MCF 10A (cell line): ENCODE measurements at regions of chr17 and their contacts with region 1.

Region 1: GRCh38 chr17:59619293-59620063 is at the start of gene CLTC:
- DNase-seq: peak; percentile 95
- H3K4me3 Mint-ChIP-seq: peak within 1 kb of the TSS; percentile 98
- H3K27ac Mint-ChIP-seq: peak within 1 kb of the TSS; percentile 100
- H3K4me1 Mint-ChIP-seq: peaks cover 23% of the 10 kb centered on the region
- H3K27me3 Mint-ChIP-seq: no peaks in the 10 kb centered on the region
- CTCF ChIP-seq: no peak
- total RNA-seq, gene CLTC: 240 and 288 TPM in 2 replicates

Region 2: GRCh38 chr17:59415397-59415796 is 204.1 kb before region 1 on chr17:
- CTCF ChIA-PET with region 1: no interaction called
- POLR2A ChIA-PET with region 1: no interaction called
- intact Hi-C with region 1: no loop called
- DNase-seq: no peak
- H3K4me3 Mint-ChIP-seq: no peak overlapping the region
- H3K27ac Mint-ChIP-seq: no peak overlapping the region
- H3K4me1 Mint-ChIP-seq: no peaks in the 10 kb centered on the region
- H3K27me3 Mint-ChIP-seq: no peaks in the 10 kb centered on the region
- CTCF ChIP-seq: no peak

Region 3: DNA sequence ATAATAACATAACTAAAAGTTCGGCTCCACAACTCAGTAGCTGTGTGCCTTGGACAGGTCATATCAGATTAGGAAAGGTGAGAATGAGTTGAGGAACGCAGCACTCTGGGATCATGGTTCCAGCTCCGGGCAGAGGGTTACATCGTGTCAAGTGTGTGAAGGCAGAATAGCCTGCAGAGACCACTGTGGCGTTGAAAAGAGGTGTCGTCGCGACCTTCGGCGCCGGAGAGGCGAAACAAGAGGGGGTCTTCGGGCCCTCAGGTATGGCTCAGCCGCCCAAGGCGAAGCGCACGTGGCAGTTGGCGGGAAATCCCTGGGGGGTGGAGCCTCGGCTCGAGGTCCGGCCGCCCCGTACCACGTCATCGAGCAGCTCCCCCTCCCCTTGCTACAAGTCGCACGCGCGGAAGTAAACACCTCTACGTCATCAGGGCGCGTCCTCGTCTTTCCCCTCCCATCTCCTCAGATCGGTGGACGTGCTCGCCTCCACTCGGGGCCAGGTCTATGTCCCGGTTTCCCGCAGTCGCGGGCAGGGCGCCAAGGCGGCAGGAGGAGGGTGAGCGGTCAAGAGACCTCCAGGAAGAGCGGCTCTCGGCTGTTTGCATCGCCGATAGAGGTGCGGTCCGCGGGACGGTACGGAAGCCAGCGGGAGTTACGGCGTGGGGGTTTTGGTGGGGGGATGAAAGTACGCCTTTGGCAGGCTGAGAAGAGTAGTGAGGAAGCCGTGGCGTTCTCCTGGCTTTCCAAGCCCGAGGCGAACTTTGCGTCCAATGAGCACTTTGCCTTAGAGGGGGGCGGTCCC is 54.1 kb before region 1 on chr17 and contains the start of gene DHX40:
- CTCF ChIA-PET with region 1: no interaction called
- POLR2A ChIA-PET with region 1: interaction called, 36 read pairs
- intact Hi-C with region 1: no loop called
- DNase-seq: peak; percentile 87
- H3K4me3 Mint-ChIP-seq: peak within 1 kb of the TSS; percentile 97
- H3K27ac Mint-ChIP-seq: peak within 1 kb of the TSS; percentile 97
- H3K4me1 Mint-ChIP-seq: peaks cover 5% of the 10 kb centered on the region
- H3K27me3 Mint-ChIP-seq: no peaks in the 10 kb centered on the region
- CTCF ChIP-seq: no peak
- total RNA-seq, gene DHX40: 21.4 and 23.3 TPM in 2 replicates

Region 4: GRCh38 chr17:59634632-59635541 is 15.4 kb after region 1 on chr17:
- CTCF ChIA-PET with region 1: interaction called, 4 read pairs
- POLR2A ChIA-PET with region 1: interaction called, 91 read pairs
- intact Hi-C with region 1: no loop called
- DNase-seq: no peak
- H3K4me3 Mint-ChIP-seq: no peak overlapping the region
- H3K27ac Mint-ChIP-seq: no peak overlapping the region
- H3K4me1 Mint-ChIP-seq: peaks cover 6% of the 10 kb centered on the region
- H3K27me3 Mint-ChIP-seq: no peaks in the 10 kb centered on the region
- CTCF ChIP-seq: no peak

Region 5: DNA sequence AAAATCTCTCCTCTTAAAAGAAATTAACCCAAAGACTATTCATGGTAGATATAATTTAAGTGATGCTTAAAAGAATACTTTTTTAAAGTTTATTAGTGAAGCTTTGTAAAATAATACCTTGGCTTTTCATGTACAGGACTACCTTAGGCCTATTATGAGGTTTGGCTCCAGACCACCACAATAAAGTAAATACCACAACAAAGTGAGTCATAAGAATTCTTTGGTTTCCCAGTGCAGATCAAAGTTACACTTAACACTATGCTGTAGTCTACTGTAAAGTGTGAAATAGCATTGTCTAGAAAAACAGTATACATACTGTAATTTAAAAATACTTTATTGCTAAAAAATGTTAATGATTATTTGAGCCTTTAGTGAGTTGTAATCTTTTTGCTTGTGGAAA is 31.9 kb after region 1 on chr17:
- CTCF ChIA-PET with region 1: no interaction called
- POLR2A ChIA-PET with region 1: interaction called, 18 read pairs
- intact Hi-C with region 1: no loop called
- DNase-seq: no peak
- H3K4me3 Mint-ChIP-seq: no peak overlapping the region
- H3K27ac Mint-ChIP-seq: no peak overlapping the region
- H3K4me1 Mint-ChIP-seq: peaks cover 6% of the 10 kb centered on the region
- H3K27me3 Mint-ChIP-seq: no peaks in the 10 kb centered on the region
- CTCF ChIP-seq: no peak

Region 6: DNA sequence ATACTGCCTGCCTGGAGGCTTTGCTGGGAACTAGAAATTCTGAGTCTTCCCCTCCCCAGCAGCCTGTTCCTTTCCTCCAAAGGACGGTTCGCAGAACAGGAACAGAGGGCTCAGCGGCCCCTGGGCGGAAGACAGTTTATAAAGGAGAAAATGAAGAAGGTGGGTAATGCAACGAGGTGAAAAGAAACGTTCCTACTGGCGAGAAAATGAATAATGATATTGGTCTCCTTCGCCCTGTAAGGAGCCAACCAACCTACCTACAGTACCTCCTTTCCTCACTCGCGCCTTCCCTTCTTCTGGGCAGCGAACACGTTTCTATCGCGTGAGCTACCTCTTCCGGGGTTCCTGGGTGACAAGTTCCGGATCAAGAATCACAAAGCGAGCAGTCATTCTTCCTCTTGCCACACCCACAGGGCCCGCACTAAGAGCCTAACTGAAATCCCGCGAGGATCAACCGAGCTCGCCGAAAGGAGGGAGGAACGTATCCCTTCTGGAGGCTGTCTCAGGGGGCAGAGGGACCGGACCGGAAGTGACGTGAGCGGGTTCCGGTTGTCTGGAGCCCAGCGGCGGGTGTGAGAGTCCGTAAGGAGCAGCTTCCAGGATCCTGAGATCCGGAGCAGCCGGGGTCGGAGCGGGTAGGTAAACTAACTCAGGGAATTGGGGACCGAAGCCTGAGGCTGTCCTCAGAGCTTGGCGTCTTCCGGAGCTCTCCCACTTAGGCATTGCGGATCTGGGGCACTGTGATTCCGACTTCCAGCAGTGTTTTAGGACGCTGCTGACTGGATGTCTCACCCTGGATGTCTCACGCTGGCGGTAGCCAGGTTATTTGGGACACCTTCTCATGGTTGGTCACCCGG is 87.9 kb after region 1 on chr17 and contains the starts of genes PTRH2 and VMP1:
- CTCF ChIA-PET with region 1: no interaction called
- POLR2A ChIA-PET with region 1: interaction called, 75 read pairs
- intact Hi-C with region 1: loop called (anchors 5 kb)
- DNase-seq: peak; percentile 99
- H3K4me3 Mint-ChIP-seq: peak within 1 kb of the TSS; percentile 94
- H3K27ac Mint-ChIP-seq: peak within 1 kb of the TSS; percentile 99
- H3K4me1 Mint-ChIP-seq: peaks cover 21% of the 10 kb centered on the region
- H3K27me3 Mint-ChIP-seq: no peaks in the 10 kb centered on the region
- CTCF ChIP-seq: no peak
- total RNA-seq, gene PTRH2: 47.5 and 51.7 TPM in 2 replicates
- total RNA-seq, gene VMP1: 205 and 228 TPM in 2 replicates